Aorta (tissue), 5 donors: ENCODE measurements at regions of chr10 and their contacts with region 1.

Region 1: GRCh38 chr10:133124357-133125211 is 35.4 kb upstream of the KNDC1 start:
- DNase-seq: peak; percentile 38 to 68
- ATAC-seq: no peak
- H3K4me3 ChIP-seq: no peak overlapping the region
- H3K27ac ChIP-seq: no peak overlapping the region
- H3K4me1 ChIP-seq: no peaks in the 10 kb centered on the region
- H3K27me3 ChIP-seq: no peaks in the 10 kb centered on the region

Region 2: DNA sequence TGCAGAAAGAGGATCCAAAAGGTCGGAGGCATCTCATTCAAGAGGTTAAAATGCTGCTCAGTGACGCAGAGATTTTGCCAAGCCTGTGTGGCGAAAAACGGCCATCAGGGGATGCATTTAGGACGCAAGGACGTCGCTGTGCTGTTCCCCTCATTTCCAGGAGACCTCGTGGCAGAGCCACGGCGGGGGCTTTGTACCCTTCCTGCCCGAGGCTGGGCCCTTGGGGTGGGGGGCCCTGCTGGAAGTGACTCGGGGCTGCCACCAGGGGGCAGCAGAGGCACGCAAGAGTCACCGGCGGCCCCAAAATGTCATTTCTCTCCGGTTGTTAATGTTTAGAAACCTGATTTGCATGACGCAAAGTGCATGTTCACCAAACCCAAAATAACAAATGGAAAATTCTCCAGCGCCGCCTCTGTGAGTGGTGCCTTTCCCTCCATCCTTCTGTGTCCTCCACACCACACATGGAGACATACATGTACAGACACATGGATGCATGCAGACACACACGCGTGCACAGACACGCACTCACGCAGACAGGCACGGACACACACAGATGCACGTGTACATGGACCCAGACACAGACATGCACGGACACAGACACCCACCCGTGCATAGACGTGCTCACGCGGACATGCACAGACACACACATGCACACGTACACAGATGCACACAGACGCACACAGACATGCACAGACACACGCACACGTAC is 287.6 kb before region 1 on chr10:
- intact Hi-C with region 1: loop called in 1 of 2 experiments (anchors 5 kb)
- DNase-seq: peak; percentile 38 to 78
- ATAC-seq: no peak
- H3K4me3 ChIP-seq: no peak overlapping the region
- H3K27ac ChIP-seq: no peak overlapping the region
- H3K4me1 ChIP-seq: no peaks in the 10 kb centered on the region
- H3K27me3 ChIP-seq: peaks cover 0 to 2% of the 10 kb centered on the region in 2 donors

Region 3: GRCh38 chr10:133245439-133246235 is 121.1 kb after region 1 on chr10:
- intact Hi-C with region 1: no loop called
- DNase-seq: no peak
- ATAC-seq: no peak
- H3K4me3 ChIP-seq: no peak overlapping the region
- H3K27ac ChIP-seq: no peak overlapping the region
- H3K4me1 ChIP-seq: no peaks in the 10 kb centered on the region
- H3K27me3 ChIP-seq: no peaks in the 10 kb centered on the region